ENCODE measurements at regions of chr6 and their contacts with region 1.

Region 1: DNA sequence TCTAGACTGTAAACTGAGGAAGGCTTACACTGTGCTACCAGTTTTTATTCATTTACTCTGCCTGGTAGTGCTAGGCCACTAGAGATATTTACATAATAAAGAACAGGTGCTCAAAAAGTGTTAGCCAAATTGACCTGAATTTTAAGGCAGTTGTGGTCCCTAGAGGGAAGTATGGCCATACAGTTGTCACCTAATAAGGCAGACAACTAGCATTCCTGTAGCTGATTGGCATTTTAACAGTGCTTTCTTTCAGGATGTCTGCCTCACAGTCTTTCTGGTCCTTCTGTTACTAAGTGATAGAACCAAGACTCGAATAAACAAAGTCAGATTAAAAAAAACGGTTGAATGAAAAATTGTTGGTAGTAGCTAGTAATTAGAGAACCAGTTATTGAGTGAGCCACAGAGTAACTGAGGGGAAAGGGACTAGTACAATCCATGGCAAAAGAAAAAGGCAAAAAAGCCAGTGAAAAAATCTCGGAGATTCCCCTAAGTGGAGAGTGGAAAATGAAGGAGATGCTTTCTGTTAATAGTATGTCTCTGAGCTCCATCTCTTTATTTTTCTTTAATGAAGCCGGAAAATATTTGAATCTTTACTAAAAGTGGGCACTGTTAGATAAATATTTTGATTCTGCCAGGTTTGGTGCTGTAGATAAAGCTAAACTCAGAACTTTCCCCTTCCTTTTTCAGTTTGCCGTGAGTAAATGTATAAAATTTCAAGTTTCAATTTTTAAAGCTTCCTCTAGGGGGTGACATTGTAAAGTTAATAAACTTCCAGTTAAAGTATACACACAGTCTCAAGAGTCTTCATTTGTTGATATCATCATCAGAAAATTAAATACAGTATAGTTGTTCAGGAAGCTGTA is 9.1 kb downstream of the VTA1 start:
- DNase-seq: no peak
- H3K4me3 ChIP-seq: no peak overlapping the region
- H3K27ac ChIP-seq: no peak overlapping the region
- H3K4me1 ChIP-seq: no peaks in the 10 kb centered on the region
- H3K27me3 ChIP-seq: no peaks in the 10 kb centered on the region
- CTCF ChIP-seq: no peak

Region 2: DNA sequence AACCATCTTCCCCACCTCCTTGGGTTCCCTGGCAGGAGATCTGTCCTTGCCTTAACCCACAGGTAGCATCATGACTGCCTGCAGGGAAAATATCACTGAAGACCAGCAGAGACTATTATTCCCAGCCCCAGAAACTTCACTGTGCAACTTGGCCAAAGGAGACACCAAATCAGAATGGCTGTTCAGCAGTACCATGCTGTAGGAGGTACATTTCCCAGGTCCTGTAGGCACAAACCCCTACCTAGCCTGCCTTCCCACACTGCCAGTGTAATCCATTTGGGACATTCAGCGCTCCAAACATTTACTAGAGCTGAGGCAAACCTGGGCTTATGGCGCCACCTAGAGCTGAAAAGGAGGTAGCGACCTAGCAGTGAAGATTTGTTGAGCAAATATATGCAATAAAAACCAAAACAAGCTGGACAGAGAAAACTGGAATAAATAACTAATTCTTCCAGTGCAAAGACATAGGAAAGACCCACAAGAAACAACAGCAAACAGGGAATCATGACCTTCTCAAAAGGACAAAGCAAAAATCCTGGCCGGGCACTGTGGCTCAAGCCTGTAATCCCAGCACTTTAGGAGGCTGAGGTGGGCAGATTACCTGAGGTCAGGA is 51.2 kb after region 1 on chr6:
- intact Hi-C with region 1: loop called (anchors 5 kb)
- DNase-seq: peak; percentile 54
- H3K4me3 ChIP-seq: no peak overlapping the region
- H3K27ac ChIP-seq: no peak overlapping the region
- H3K4me1 ChIP-seq: no peaks in the 10 kb centered on the region
- H3K27me3 ChIP-seq: no peaks in the 10 kb centered on the region
- CTCF ChIP-seq: peak; percentile 64

Measured in colonic mucosa (tissue), 4 donors.